Heart left ventricle (tissue), 16 donors: ENCODE measurements at regions of chr11 and their contacts with region 1.

Region 1: GRCh38 chr11:10735481-10736475 is 15.3 kb upstream of the CTR9 start:
- DNase-seq: peak; percentile 93 to 98 (median 96)
- ATAC-seq: peak; percentile 99 to 100 (median 100)
- H3K4me3 ChIP-seq: peak overlapping the region in 10 of 12 donors; percentile 6 to 45 (median 28)
- H3K27ac ChIP-seq: peak overlapping the region in 10 of 12 donors; percentile 17 to 75 (median 66)
- H3K4me1 ChIP-seq: peaks cover 0 to 13% (median 5%) of the 10 kb centered on the region in 12 donors
- H3K27me3 ChIP-seq: no peaks in the 10 kb centered on the region
- CTCF ChIP-seq: peak; percentile 97 to 100 (median 99)
- POLR2A ChIP-seq: no peak

Region 2: GRCh38 chr11:10514210-10514609 is 221.6 kb before region 1 on chr11:
- intact Hi-C with region 1: loop called in 9 of 10 experiments (anchors 1 to 5 kb)
- DNase-seq: no peak
- ATAC-seq: no peak
- H3K4me3 ChIP-seq: no peak overlapping the region
- H3K27ac ChIP-seq: no peak overlapping the region
- H3K4me1 ChIP-seq: peaks cover 0 to 10% (median under 1%) of the 10 kb centered on the region in 12 donors
- H3K27me3 ChIP-seq: no peaks in the 10 kb centered on the region
- CTCF ChIP-seq: peak in 11 of 12 donors; percentile 16 to 57 (median 42)
- POLR2A ChIP-seq: no peak

Region 3: GRCh38 chr11:10540923-10541560 is 194.7 kb before region 1 on chr11 and contains the start of gene RNF141:
- intact Hi-C with region 1: loop called in 2 of 10 experiments (anchors 10 kb)
- DNase-seq: peak; percentile 95 to 98 (median 96)
- ATAC-seq: peak; percentile 98 to 100 (median 100)
- H3K4me3 ChIP-seq: peak within 1 kb of the TSS; percentile 69 to 94 (median 80)
- H3K27ac ChIP-seq: peak within 1 kb of the TSS; percentile 35 to 94 (median 87)
- H3K4me1 ChIP-seq: peaks cover 0 to 28% (median 7%) of the 10 kb centered on the region in 12 donors
- H3K27me3 ChIP-seq: no peaks in the 10 kb centered on the region
- CTCF ChIP-seq: peak; percentile 70 to 94 (median 86)
- POLR2A ChIP-seq: peak in 1 of 2 donors; percentile 88
- total RNA-seq, gene RNF141: 18.8 to 42.8 (median 36.5) TPM

Region 4: DNA sequence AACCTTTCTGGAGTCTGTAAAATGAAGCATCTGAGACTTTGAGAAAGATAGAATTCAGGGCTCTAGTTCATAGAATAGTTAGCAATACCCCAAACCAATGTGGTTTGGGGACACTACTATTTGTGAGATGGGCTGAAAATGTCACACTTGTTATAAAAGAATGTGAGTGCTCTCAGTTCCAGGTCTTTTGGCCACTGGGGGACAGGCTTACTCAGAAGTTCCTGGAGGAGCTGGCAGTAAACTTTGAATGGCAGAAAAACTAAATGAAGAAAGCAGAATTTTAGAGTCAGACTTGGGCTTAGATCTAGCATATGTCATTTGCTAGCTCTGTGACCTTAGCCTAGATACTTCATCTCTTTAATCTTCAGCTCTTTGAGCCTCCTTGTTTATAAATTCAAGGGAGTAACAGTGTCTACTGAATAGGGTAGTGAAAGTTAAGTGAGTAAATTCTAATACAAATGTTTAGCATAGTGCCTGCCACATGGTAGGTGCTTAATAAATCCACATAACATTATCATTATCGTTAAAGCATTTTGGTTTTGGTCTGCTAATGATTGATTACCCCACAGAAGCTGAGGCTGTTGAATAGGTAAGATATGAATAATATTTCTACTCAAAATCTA is 171.0 kb before region 1 on chr11:
- intact Hi-C with region 1: loop called in 1 of 10 experiments (anchors 10 kb)
- DNase-seq: no peak
- ATAC-seq: no peak
- H3K4me3 ChIP-seq: peak overlapping the region in 4 of 12 donors; percentile 10 to 38 (median 14)
- H3K27ac ChIP-seq: no peak overlapping the region
- H3K4me1 ChIP-seq: peaks cover 0 to 23% (median 0%) of the 10 kb centered on the region in 12 donors
- H3K27me3 ChIP-seq: no peaks in the 10 kb centered on the region
- CTCF ChIP-seq: peak in 10 of 12 donors; percentile 24 to 47 (median 38)
- POLR2A ChIP-seq: no peak

Region 5: DNA sequence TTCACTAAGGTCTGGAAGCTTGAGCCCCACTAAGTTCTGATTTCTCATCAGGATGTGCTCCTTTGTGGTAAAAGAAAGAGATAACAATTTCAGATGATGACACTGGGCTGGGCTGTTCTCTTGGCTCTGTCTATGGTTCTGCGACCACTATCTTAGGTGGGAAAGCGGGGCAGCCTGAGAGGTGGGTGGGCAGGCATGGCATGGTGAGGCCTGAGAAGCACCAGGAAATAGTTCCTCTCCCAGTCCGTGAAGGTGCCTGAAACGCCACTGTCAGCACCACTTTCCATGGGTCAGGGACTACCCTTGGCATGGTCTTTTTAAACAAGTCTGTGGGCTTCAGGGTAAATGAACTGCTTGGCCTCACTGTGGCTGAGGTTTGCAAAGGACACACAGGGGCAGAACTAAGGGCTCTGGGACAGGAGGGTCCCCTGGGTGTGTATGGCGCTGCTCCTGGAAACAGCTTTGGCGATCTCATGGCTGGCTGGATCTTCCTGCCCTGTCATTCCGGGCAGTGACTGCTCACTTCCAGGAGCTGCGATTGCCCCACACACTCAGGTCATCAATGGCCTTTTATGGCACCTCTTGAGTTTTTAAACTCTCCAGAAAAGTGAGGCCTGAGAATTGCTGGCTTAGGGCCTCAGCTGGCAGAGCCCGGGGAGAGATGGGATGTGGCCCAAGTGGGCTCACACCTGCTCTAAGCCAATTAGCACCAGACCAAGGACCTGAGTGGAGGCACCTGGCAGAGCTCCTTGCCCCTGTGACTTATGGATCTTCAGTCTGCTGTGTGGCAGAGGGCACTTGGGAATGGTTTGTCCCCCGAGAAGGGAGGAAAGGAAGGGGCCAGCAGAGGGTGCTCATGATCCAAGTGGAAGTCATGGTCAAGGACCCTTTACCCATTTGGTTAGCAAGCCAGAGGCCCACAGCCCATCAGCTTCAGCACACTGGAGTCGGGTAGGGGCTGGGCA is 111.7 kb before region 1 on chr11:
- intact Hi-C with region 1: loop called in 8 of 10 experiments (anchors 1 to 10 kb)
- DNase-seq: peak in 1 of 5 donors; percentile 41
- ATAC-seq: peak in 2 of 4 donors; percentile 26 to 43
- H3K4me3 ChIP-seq: no peak overlapping the region
- H3K27ac ChIP-seq: peak overlapping the region in 5 of 12 donors; percentile 1 to 85 (median 26)
- H3K4me1 ChIP-seq: peaks cover 0 to 33% (median 3%) of the 10 kb centered on the region in 12 donors
- H3K27me3 ChIP-seq: no peaks in the 10 kb centered on the region
- CTCF ChIP-seq: peak; percentile 25 to 60 (median 37)
- POLR2A ChIP-seq: no peak

Region 6: GRCh38 chr11:10824888-10825287 is 89.1 kb after region 1 on chr11:
- intact Hi-C with region 1: no loop called
- DNase-seq: no peak
- ATAC-seq: no peak
- H3K4me3 ChIP-seq: no peak overlapping the region
- H3K27ac ChIP-seq: no peak overlapping the region
- H3K4me1 ChIP-seq: peaks cover 0 to 9% (median 0%) of the 10 kb centered on the region in 12 donors
- H3K27me3 ChIP-seq: no peaks in the 10 kb centered on the region
- CTCF ChIP-seq: no peak
- POLR2A ChIP-seq: no peak